Activated T-helper 2 cell treated with anti-CD3 and anti-CD28 coated beads, Interferon-gamma antibody, Interleukin-2, Interleukin-4, amounts not matched to agents 10 μg/mL and 5 μg/mL and 100 μg/mL, durations not matched to agents 14 hours and 24 hours and 36 hours (primary cell): ENCODE measurements at regions of chr19 and their contacts with region 1.

Region 1: DNA sequence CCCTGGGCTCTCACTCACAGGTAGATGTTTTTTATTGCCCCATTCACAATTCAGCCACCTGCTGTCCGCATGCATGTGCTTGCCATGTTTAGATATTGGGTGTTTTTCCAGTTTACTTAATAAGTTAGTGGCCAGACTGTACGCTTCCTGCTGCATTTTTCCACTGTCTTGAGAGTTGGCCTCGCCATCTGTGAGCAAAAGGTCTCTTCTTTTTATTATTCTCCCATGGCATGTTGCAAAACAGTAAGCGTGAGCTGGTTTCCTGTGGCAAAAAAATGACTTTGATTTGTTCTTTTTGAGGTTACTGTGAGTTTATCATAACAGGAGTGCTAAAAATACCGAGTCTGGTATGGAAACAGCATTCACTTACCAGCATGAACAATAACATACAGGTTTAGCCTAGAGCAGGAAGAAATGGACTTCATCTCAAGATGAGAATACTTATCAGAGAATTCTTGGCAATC is 46.0 kb downstream of the SAE1 start:
- DNase-seq: peak; percentile 25
- H3K4me3 Mint-ChIP-seq: peak overlapping the region; percentile 51
- H3K27ac Mint-ChIP-seq: peak overlapping the region; percentile 93
- H3K4me1 Mint-ChIP-seq: peaks cover 48% of the 10 kb centered on the region
- H3K27me3 Mint-ChIP-seq: no peaks in the 10 kb centered on the region

Region 2: GRCh38 chr19:47157431-47158321 is 19.0 kb before region 1 on chr19:
- intact Hi-C with region 1: loop called (anchors 1 kb)
- DNase-seq: no peak
- H3K4me3 Mint-ChIP-seq: peak overlapping the region; percentile 31
- H3K27ac Mint-ChIP-seq: peak overlapping the region; percentile 90
- H3K4me1 Mint-ChIP-seq: peaks cover 43% of the 10 kb centered on the region
- H3K27me3 Mint-ChIP-seq: no peaks in the 10 kb centered on the region